ENCODE measurements at regions of chr12 and their contacts with region 1.

Region 1: GRCh38 chr12:19643635-19644034 is 204.3 kb downstream of the AEBP2 start:
- DNase-seq: no peak
- H3K4me3 ChIP-seq: no peak overlapping the region
- H3K27ac ChIP-seq: no peak overlapping the region
- H3K4me1 ChIP-seq: peaks cover 0 to 14% (median 10%) of the 10 kb centered on the region in 4 donors
- H3K27me3 ChIP-seq: no peaks in the 10 kb centered on the region
- CTCF ChIP-seq: peak; percentile 63 to 71

Region 2: DNA sequence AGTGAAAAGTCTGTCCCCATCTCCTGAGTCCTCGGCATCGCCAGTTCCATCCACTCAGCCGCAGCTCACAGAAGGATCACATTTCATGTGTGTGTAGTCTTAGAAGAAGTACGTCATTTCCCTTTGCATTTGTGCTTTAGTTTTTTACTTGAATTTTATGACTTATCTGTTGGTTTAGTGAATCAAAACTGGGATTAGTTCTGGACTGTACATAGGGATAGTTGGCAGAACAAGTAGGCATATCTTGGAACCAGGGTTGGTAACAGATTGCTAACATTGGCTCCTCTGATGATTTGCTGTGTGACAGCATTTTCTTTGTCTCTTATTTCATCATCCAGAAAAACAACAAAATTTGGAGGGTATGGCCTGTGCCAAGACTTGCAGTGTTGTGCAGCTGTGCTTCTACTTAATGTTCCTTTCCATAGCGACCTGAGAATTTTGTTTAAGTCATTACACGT is 273.9 kb before region 1 on chr12:
- intact Hi-C with region 1: loop called (anchors 10 kb)
- DNase-seq: peak in 1 of 2 donors; percentile 78
- H3K4me3 ChIP-seq: no peak overlapping the region
- H3K27ac ChIP-seq: peak overlapping the region; percentile 60
- H3K4me1 ChIP-seq: peaks cover 0 to 23% (median 5%) of the 10 kb centered on the region in 4 donors
- H3K27me3 ChIP-seq: no peaks in the 10 kb centered on the region
- CTCF ChIP-seq: no peak

Region 3: GRCh38 chr12:19507823-19508222 is 135.8 kb before region 1 on chr12:
- intact Hi-C with region 1: loop called (anchors 10 kb)
- DNase-seq: no peak
- H3K4me3 ChIP-seq: no peak overlapping the region
- H3K27ac ChIP-seq: peak overlapping the region; percentile 8 to 45
- H3K4me1 ChIP-seq: peaks cover 0 to 71% (median 20%) of the 10 kb centered on the region in 4 donors
- H3K27me3 ChIP-seq: no peaks in the 10 kb centered on the region
- CTCF ChIP-seq: peak; percentile 31 to 40

Measured in tibial artery (tissue), 4 donors.